CD4-positive, alpha-beta memory T cell (primary cell): ENCODE measurements at regions of chr1 and their contacts with region 1.

Region 1: GRCh38 chr1:42913426-42914091 is 45.1 kb downstream of the SLC2A1 start:
- DNase-seq: peak; percentile 70 to 84 (median 78)
- H3K4me3 ChIP-seq: no peak overlapping the region
- H3K4me3 Mint-ChIP-seq: no peak overlapping the region
- H3K27ac ChIP-seq: no peak overlapping the region
- H3K27ac Mint-ChIP-seq: no peak overlapping the region
- H3K4me1 ChIP-seq: no peaks in the 10 kb centered on the region
- H3K4me1 Mint-ChIP-seq: peaks cover 0 to 5% (median 2%) of the 10 kb centered on the region in 4 donors
- H3K27me3 ChIP-seq: no peaks in the 10 kb centered on the region
- H3K27me3 Mint-ChIP-seq: peaks cover 2 to 4% of the 10 kb centered on the region in 2 donors

Region 2: GRCh38 chr1:42146626-42147320 is 766.8 kb before region 1 on chr1:
- CTCF ChIA-PET with region 1: no interaction called
- POLR2A ChIA-PET with region 1: no interaction called
- intact Hi-C with region 1: loop called (anchors 10 kb)
- DNase-seq: peak; percentile 56 to 72 (median 62)
- H3K4me3 ChIP-seq: no peak overlapping the region
- H3K4me3 Mint-ChIP-seq: no peak overlapping the region
- H3K27ac ChIP-seq: no peak overlapping the region
- H3K27ac Mint-ChIP-seq: no peak overlapping the region
- H3K4me1 ChIP-seq: no peaks in the 10 kb centered on the region
- H3K4me1 Mint-ChIP-seq: peaks cover 2 to 7% (median 3%) of the 10 kb centered on the region in 4 donors
- H3K27me3 ChIP-seq: no peaks in the 10 kb centered on the region
- H3K27me3 Mint-ChIP-seq: peaks cover 10 to 16% of the 10 kb centered on the region in 2 donors

Region 3: DNA sequence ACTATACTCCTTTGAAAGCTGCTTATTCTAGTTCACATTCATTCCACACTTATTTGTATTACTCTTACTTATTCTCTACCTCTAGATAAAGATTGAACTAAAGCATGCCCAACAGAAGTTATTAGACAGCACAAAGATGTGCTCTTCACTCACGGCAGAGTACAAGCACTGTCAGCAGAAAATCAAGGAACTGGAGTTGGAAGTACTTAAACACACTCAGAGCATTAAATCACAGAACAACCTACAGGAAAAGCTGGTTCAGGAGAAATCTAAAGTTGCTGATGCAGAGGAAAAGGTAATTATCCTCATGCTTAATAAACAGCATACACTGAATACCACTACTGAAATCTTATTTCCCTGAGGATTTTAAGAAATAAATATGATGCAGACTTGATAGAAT is 336.6 kb before region 1 on chr1:
- CTCF ChIA-PET with region 1: interaction called, 3 read pairs
- POLR2A ChIA-PET with region 1: no interaction called
- intact Hi-C with region 1: loop called (anchors 1 kb)
- DNase-seq: no peak
- H3K4me3 ChIP-seq: no peak overlapping the region
- H3K4me3 Mint-ChIP-seq: no peak overlapping the region
- H3K27ac ChIP-seq: no peak overlapping the region
- H3K27ac Mint-ChIP-seq: no peak overlapping the region
- H3K4me1 ChIP-seq: no peaks in the 10 kb centered on the region
- H3K4me1 Mint-ChIP-seq: no peaks in the 10 kb centered on the region
- H3K27me3 ChIP-seq: no peaks in the 10 kb centered on the region
- H3K27me3 Mint-ChIP-seq: no peaks in the 10 kb centered on the region

Region 4: GRCh38 chr1:42931108-42931539 is 17.6 kb after region 1 on chr1:
- CTCF ChIA-PET with region 1: interaction called, 15 read pairs
- POLR2A ChIA-PET with region 1: interaction called, 7 read pairs
- intact Hi-C with region 1: loop called (anchors 1 kb)
- DNase-seq: peak; percentile 67 to 73 (median 71)
- H3K4me3 ChIP-seq: peak overlapping the region in 1 of 2 donors; percentile 29
- H3K4me3 Mint-ChIP-seq: peak overlapping the region; percentile 75 to 92 (median 82)
- H3K27ac ChIP-seq: peak overlapping the region; percentile 53
- H3K27ac Mint-ChIP-seq: peak overlapping the region; percentile 92 to 98 (median 96)
- H3K4me1 ChIP-seq: peaks cover 64% of the 10 kb centered on the region
- H3K4me1 Mint-ChIP-seq: peaks cover 47 to 75% (median 62%) of the 10 kb centered on the region in 4 donors
- H3K27me3 ChIP-seq: no peaks in the 10 kb centered on the region
- H3K27me3 Mint-ChIP-seq: no peaks in the 10 kb centered on the region

Region 5: GRCh38 chr1:43083375-43083891 is 169.9 kb after region 1 on chr1:
- CTCF ChIA-PET with region 1: interaction called, 864 read pairs
- POLR2A ChIA-PET with region 1: no interaction called
- intact Hi-C with region 1: no loop called
- DNase-seq: no peak
- H3K4me3 ChIP-seq: no peak overlapping the region
- H3K4me3 Mint-ChIP-seq: no peak overlapping the region
- H3K27ac ChIP-seq: no peak overlapping the region
- H3K27ac Mint-ChIP-seq: no peak overlapping the region
- H3K4me1 ChIP-seq: no peaks in the 10 kb centered on the region
- H3K4me1 Mint-ChIP-seq: no peaks in the 10 kb centered on the region
- H3K27me3 ChIP-seq: no peaks in the 10 kb centered on the region
- H3K27me3 Mint-ChIP-seq: peaks cover 14 to 23% of the 10 kb centered on the region in 2 donors

Region 6: GRCh38 chr1:43227143-43227764 is 313.7 kb after region 1 on chr1:
- CTCF ChIA-PET with region 1: no interaction called
- POLR2A ChIA-PET with region 1: no interaction called
- intact Hi-C with region 1: loop called (anchors 5 kb)
- DNase-seq: peak; percentile 68 to 75 (median 72)
- H3K4me3 ChIP-seq: no peak overlapping the region
- H3K4me3 Mint-ChIP-seq: no peak overlapping the region
- H3K27ac ChIP-seq: no peak overlapping the region
- H3K27ac Mint-ChIP-seq: peak overlapping the region in 2 of 7 donors; percentile 18 to 53
- H3K4me1 ChIP-seq: no peaks in the 10 kb centered on the region
- H3K4me1 Mint-ChIP-seq: no peaks in the 10 kb centered on the region
- H3K27me3 ChIP-seq: no peaks in the 10 kb centered on the region
- H3K27me3 Mint-ChIP-seq: peaks cover 0 to 9% of the 10 kb centered on the region in 2 donors

Region 7: DNA sequence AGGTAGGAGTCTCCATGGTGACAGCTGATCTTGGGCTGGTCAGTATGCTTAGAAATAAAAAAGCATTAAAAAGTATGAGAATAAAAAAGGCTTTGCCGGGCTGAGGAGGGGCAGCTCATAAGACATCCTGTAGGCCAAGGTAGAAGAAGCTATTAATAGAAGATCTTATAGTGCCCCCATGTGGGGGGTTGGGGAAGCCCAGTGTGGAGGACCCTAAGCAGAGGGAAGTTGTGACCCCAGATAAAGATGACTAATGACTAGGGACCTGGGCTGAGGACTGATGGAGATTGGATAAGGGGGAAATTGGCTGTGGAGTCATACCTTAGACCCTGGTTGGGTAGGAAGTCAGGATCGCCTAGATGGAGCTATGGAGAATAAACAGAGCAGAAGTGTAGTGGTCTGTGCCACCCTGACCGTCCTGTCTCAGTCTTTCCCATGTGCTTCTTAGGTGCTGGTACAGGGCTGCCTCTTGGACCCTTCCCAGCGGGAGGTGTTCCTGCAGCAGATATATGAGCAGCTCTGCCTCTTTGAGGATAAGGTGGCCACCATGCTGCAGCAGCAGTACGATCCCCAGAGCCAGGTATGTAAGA is 501.2 kb after region 1 on chr1:
- CTCF ChIA-PET with region 1: interaction called, 5 read pairs
- POLR2A ChIA-PET with region 1: no interaction called
- intact Hi-C with region 1: loop called (anchors 2 kb)
- DNase-seq: peak; percentile 58 to 68 (median 67)
- H3K4me3 ChIP-seq: no peak overlapping the region
- H3K4me3 Mint-ChIP-seq: no peak overlapping the region
- H3K27ac ChIP-seq: no peak overlapping the region
- H3K27ac Mint-ChIP-seq: peak overlapping the region in 4 of 7 donors; percentile 4 to 87 (median 68)
- H3K4me1 ChIP-seq: no peaks in the 10 kb centered on the region
- H3K4me1 Mint-ChIP-seq: peaks cover 0 to 6% (median 5%) of the 10 kb centered on the region in 4 donors
- H3K27me3 ChIP-seq: no peaks in the 10 kb centered on the region
- H3K27me3 Mint-ChIP-seq: no peaks in the 10 kb centered on the region

Region 8: GRCh38 chr1:43783671-43784205 is 870.2 kb after region 1 on chr1:
- CTCF ChIA-PET with region 1: no interaction called
- POLR2A ChIA-PET with region 1: no interaction called
- intact Hi-C with region 1: no loop called
- DNase-seq: no peak
- H3K4me3 ChIP-seq: no peak overlapping the region
- H3K4me3 Mint-ChIP-seq: no peak overlapping the region
- H3K27ac ChIP-seq: no peak overlapping the region
- H3K27ac Mint-ChIP-seq: peak overlapping the region in 1 of 7 donors; percentile 20
- H3K4me1 ChIP-seq: no peaks in the 10 kb centered on the region
- H3K4me1 Mint-ChIP-seq: peaks cover 0 to 12% (median 0%) of the 10 kb centered on the region in 4 donors
- H3K27me3 ChIP-seq: no peaks in the 10 kb centered on the region
- H3K27me3 Mint-ChIP-seq: no peaks in the 10 kb centered on the region